PC-3 (cell line): ENCODE measurements at regions of chr1 and their contacts with region 1.

Region 1: GRCh38 chr1:95084317-95085176 is 11.8 kb upstream of the ALG14 start:
- DNase-seq: peak; percentile 77
- ATAC-seq: peak; percentile 92
- H3K4me3 ChIP-seq: no peak overlapping the region
- H3K27ac ChIP-seq: peak overlapping the region; percentile 71
- H3K4me1 ChIP-seq: peaks cover 34% of the 10 kb centered on the region
- H3K27me3 ChIP-seq: no peaks in the 10 kb centered on the region
- CTCF ChIP-seq: peak; percentile 88

Region 2: DNA sequence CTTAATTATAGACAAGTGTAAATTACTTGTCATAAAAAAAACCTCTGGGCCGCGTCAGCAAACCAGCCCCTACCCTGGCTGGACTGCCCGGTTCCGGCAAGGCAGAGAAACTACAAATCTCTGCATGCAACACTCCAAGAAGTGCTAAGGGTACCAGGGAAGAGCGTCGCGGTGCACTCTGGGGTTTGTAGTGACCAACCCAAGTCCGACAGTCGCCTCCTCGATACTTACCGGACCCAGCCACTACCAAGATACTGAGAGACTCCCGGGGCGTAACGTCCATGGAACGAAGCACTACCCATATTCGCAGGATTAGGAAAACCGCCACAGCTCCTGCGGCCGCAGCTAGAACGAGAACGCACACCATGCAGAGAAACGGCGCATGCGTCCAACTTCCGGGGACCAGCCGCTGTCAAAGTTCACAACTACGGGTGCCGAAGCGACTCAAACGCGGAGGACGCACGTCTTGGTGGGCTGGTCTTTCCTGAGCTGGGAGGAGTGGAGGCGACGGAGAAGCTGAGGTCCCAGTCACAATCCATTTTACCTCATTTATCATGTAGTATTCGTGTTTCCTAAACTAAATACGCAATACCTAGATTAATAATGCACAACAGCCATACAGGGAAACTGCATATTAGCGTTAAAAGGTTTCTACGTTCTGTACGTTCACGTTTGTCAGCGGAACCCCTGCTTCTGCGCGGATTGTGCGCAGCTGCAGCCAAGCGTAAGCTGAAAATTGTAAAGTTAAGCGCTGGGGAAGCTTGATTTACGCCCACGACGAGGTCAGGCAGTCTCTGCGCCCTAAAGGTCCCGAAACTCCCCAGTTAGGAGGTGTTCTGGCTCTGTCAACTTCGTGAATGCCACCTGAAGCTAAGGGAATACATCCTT is 11.8 kb before region 1 on chr1 and contains the start of gene ALG14:
- CTCF ChIA-PET with region 1: interaction called, 7 read pairs
- POLR2A ChIA-PET with region 1: no interaction called
- intact Hi-C with region 1: loop called (anchors 1 kb)
- DNase-seq: peak; percentile 94
- ATAC-seq: peak; percentile 99
- H3K4me3 ChIP-seq: peak within 1 kb of the TSS; percentile 91
- H3K27ac ChIP-seq: peak within 1 kb of the TSS; percentile 78
- H3K4me1 ChIP-seq: peaks cover 16% of the 10 kb centered on the region
- H3K27me3 ChIP-seq: no peaks in the 10 kb centered on the region
- CTCF ChIP-seq: no peak
- total RNA-seq, gene ALG14: 3.4 and 9.7 TPM in 2 replicates